Activated B cell treated with CpG ODN at 0.5 μM for 24 hours (primary cell): ENCODE measurements at regions of chr9 and their contacts with region 1.

Region 1: DNA sequence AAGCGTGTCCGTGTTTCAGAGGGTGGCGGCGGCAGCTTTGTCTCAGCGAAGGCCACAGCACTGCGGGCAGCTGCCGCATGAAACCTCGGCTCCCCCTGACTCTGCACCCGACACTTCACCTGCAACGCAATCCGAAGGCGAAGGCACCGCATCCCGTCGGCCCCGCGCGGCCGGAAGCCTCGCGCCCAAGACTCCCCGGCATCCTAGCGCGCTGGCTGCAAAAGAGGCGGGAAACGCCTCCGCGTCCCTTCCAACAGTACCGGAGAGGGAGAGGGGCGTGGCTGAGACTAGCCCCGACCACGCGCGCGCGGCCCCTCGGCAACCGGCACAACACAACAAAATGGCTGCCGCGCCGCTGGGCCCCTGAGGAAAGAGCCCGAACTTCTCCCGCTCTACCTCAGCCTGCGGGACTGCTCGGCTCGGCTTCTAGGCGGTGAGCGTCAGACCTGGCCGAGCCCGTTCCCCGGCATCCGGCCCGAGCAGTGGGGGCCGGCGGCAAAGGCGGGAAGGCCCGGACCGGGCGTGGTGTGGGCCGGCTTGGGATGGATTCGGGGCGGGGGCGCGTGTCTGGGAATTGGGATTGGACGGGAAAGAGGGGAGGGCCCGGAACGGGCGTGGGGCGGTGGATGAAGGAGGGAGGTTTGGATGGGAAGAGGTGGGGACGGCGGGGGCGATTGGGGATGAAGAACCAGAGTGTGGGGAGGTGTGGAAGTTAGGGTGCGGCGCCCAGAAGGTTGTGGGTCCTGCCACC is at the start of gene CNTRL:
- DNase-seq: peak; percentile 77
- ATAC-seq: peak; percentile 68
- H3K4me3 Mint-ChIP-seq: peak within 1 kb of the TSS; percentile 96
- H3K27ac Mint-ChIP-seq: peak within 1 kb of the TSS; percentile 98
- H3K4me1 Mint-ChIP-seq: peaks cover 75% of the 10 kb centered on the region
- H3K27me3 Mint-ChIP-seq: no peaks in the 10 kb centered on the region
- CTCF ChIP-seq: no peak
- total RNA-seq, gene CNTRL: 98.4 and 110 TPM in 2 replicates

Region 2: DNA sequence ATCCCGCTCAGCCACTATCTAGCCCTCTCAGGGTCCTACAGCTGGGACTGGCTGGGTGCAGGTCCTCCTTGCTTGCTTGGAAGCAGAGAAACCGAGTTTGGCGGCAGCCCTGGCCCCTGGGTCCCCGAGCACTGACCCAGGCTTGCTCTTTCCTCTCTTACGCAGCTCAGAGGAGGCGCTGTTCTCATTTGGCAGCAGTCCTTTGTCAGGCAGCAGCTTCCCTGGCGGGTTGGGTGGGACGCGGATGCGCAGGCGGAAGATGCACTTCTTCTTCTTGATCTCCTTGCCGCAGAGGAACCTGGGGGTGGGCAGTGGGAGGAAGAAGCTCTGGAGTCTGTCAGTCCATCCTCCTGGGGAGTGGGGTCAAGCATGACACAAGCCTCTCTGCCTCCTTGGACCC is 212.4 kb before region 1 on chr9:
- CTCF ChIA-PET with region 1: no interaction called
- POLR2A ChIA-PET with region 1: no interaction called
- intact Hi-C with region 1: no loop called
- DNase-seq: no peak
- ATAC-seq: no peak
- H3K4me3 Mint-ChIP-seq: no peak overlapping the region
- H3K27ac Mint-ChIP-seq: no peak overlapping the region
- H3K4me1 Mint-ChIP-seq: peaks cover 3% of the 10 kb centered on the region
- H3K27me3 Mint-ChIP-seq: no peaks in the 10 kb centered on the region
- CTCF ChIP-seq: no peak

Region 3: GRCh38 chr9:120892748-120893610 is 181.8 kb before region 1 on chr9:
- CTCF ChIA-PET with region 1: no interaction called
- POLR2A ChIA-PET with region 1: interaction called, 3 read pairs
- intact Hi-C with region 1: loop called (anchors 1 kb)
- DNase-seq: no peak
- ATAC-seq: peak; percentile 82
- H3K4me3 Mint-ChIP-seq: peak overlapping the region; percentile 61
- H3K27ac Mint-ChIP-seq: peak overlapping the region; percentile 90
- H3K4me1 Mint-ChIP-seq: peaks cover 60% of the 10 kb centered on the region
- H3K27me3 Mint-ChIP-seq: no peaks in the 10 kb centered on the region
- CTCF ChIP-seq: no peak

Region 4: DNA sequence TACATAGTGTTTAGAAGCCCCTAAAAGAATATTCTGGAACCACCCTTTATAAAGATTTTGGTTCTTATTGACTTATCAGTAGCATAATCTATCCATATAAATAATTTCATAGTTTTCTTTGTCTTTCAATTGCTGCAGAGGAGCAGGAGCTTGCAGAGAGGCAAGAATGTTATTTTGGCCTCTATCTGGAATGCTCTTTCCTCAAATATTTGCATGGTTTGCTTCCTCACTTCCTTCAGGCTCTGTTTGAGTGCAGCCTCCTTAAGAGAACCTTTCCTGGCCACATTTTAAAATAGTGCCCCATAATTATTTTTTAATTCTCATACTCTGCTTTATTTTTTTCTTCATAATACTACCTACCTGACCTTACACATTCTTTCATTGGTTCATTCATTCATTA is 26.2 kb before region 1 on chr9:
- CTCF ChIA-PET with region 1: no interaction called
- POLR2A ChIA-PET with region 1: no interaction called
- intact Hi-C with region 1: no loop called
- DNase-seq: no peak
- ATAC-seq: no peak
- H3K4me3 Mint-ChIP-seq: no peak overlapping the region
- H3K27ac Mint-ChIP-seq: no peak overlapping the region
- H3K4me1 Mint-ChIP-seq: no peaks in the 10 kb centered on the region
- H3K27me3 Mint-ChIP-seq: no peaks in the 10 kb centered on the region
- CTCF ChIP-seq: no peak

Region 5: GRCh38 chr9:121059998-121060636 is 14.7 kb before region 1 on chr9:
- CTCF ChIA-PET with region 1: interaction called, 40 read pairs
- POLR2A ChIA-PET with region 1: interaction called, 4 read pairs
- intact Hi-C with region 1: loop called (anchors 2 kb)
- DNase-seq: no peak
- ATAC-seq: peak; percentile 67
- H3K4me3 Mint-ChIP-seq: no peak overlapping the region
- H3K27ac Mint-ChIP-seq: no peak overlapping the region
- H3K4me1 Mint-ChIP-seq: peaks cover 5% of the 10 kb centered on the region
- H3K27me3 Mint-ChIP-seq: no peaks in the 10 kb centered on the region
- CTCF ChIP-seq: peak; percentile 56

Region 6: DNA sequence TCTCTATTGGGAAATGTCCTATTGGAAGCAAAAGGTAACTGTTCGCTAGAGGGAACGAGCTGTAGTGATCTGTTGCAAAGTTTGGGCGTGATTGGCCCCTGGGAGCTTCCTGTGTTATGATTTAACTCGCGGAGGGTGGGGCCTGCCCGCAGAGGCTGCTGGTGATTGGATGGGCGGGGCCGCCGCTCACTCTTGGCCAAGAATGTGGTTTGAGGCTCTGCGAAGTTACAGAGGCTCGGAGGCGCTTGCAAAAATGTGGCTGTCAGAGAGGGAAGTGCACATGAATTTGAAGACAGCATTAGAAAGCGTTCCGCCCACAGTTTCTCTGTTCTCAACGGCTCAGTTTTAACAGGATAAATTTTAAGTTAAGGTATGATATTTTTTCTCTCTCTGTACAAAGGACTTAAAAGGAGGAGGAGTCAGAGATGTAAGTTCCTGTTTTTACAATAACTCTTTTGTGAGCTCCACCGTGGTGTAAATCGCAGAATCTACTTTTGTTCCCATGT is 46.8 kb after region 1 on chr9:
- CTCF ChIA-PET with region 1: interaction called, 4 read pairs
- POLR2A ChIA-PET with region 1: interaction called, 16 read pairs
- intact Hi-C with region 1: loop called (anchors 1 kb)
- DNase-seq: peak; percentile 84
- ATAC-seq: peak; percentile 99
- H3K4me3 Mint-ChIP-seq: peak overlapping the region; percentile 91
- H3K27ac Mint-ChIP-seq: peak overlapping the region; percentile 95
- H3K4me1 Mint-ChIP-seq: peaks cover 45% of the 10 kb centered on the region
- H3K27me3 Mint-ChIP-seq: no peaks in the 10 kb centered on the region
- CTCF ChIP-seq: no peak

Region 7: GRCh38 chr9:121369595-121370265 is 294.9 kb after region 1 on chr9 and contains the start of gene STOM:
- CTCF ChIA-PET with region 1: no interaction called
- POLR2A ChIA-PET with region 1: no interaction called
- intact Hi-C with region 1: loop called (anchors 10 kb)
- DNase-seq: no peak
- ATAC-seq: peak; percentile 56
- H3K4me3 Mint-ChIP-seq: peak within 1 kb of the TSS; percentile 93
- H3K27ac Mint-ChIP-seq: peak within 1 kb of the TSS; percentile 96
- H3K4me1 Mint-ChIP-seq: peaks cover 28% of the 10 kb centered on the region
- H3K27me3 Mint-ChIP-seq: no peaks in the 10 kb centered on the region
- CTCF ChIP-seq: no peak
- total RNA-seq, gene STOM: 9.8 and 11.3 TPM in 2 replicates